ENCODE measurements at regions of chr10 and their contacts with region 1.

Region 1: GRCh38 chr10:133364645-133365431 is 7.0 kb upstream of the FUOM start:
- DNase-seq: no peak
- H3K4me3 ChIP-seq: no peak overlapping the region
- H3K27ac ChIP-seq: no peak overlapping the region
- H3K4me1 ChIP-seq: no peaks in the 10 kb centered on the region
- H3K27me3 ChIP-seq: no peaks in the 10 kb centered on the region
- CTCF ChIP-seq: no peak

Region 2: GRCh38 chr10:132175907-132176581 is 1188.8 kb before region 1 on chr10:
- CTCF ChIA-PET with region 1: no interaction called
- dilution Hi-C with region 1: no loop called
- in situ Hi-C with region 1: no loop called
- intact Hi-C with region 1: no loop called
- DNase-seq: no peak
- H3K4me3 ChIP-seq: no peak overlapping the region
- H3K27ac ChIP-seq: no peak overlapping the region
- H3K4me1 ChIP-seq: no peaks in the 10 kb centered on the region
- H3K27me3 ChIP-seq: no peaks in the 10 kb centered on the region
- CTCF ChIP-seq: no peak

Region 3: GRCh38 chr10:133324198-133324792 is 40.5 kb before region 1 on chr10:
- CTCF ChIA-PET with region 1: no interaction called
- dilution Hi-C with region 1: loop called (anchors 5 kb)
- in situ Hi-C with region 1: no loop called
- intact Hi-C with region 1: no loop called
- DNase-seq: no peak
- H3K4me3 ChIP-seq: peak overlapping the region in 1 of 3 experiments; percentile 9
- H3K27ac ChIP-seq: no peak overlapping the region
- H3K4me1 ChIP-seq: peaks cover 12% of the 10 kb centered on the region
- H3K27me3 ChIP-seq: peaks cover 22% of the 10 kb centered on the region
- CTCF ChIP-seq: no peak